ENCODE measurements at regions of chr6 and their contacts with region 1.

Region 1: GRCh38 chr6:106629103-106629858 is at the starts of genes QRSL1 and RTN4IP1:
- DNase-seq: peak; percentile 89
- H3K4me3 Mint-ChIP-seq: peak within 1 kb of the TSS; percentile 92
- H3K27ac Mint-ChIP-seq: peak within 1 kb of the TSS; percentile 90
- H3K4me1 Mint-ChIP-seq: peaks cover 43% of the 10 kb centered on the region
- H3K27me3 Mint-ChIP-seq: no peaks in the 10 kb centered on the region
- total RNA-seq, gene QRSL1: 11.6 to 12.2 TPM
- total RNA-seq, gene RTN4IP1: 5.8 to 7.7 TPM

Region 2: GRCh38 chr6:106617302-106617701 is 12.0 kb before region 1 on chr6:
- CTCF ChIA-PET with region 1: interaction called, 9 read pairs
- POLR2A ChIA-PET with region 1: interaction called, 29 read pairs
- DNase-seq: no peak
- H3K4me3 Mint-ChIP-seq: no peak overlapping the region
- H3K27ac Mint-ChIP-seq: no peak overlapping the region
- H3K4me1 Mint-ChIP-seq: peaks cover 43% of the 10 kb centered on the region
- H3K27me3 Mint-ChIP-seq: no peaks in the 10 kb centered on the region

Measured in activated CD4-positive, alpha-beta memory T cell treated with anti-CD3 and anti-CD28 coated beads, Interleukin-2, amount 10 ng/mL, durations not matched to agents 7 days and 5 days (primary cell).